CD8-positive, alpha-beta T cell (primary cell): ENCODE measurements at regions of chr2 and their contacts with region 1.

Region 1: GRCh38 chr2:106085181-106085940 is 108.7 kb downstream of the UXS1 start:
- DNase-seq: peak in 7 of 9 experiments; percentile 44 to 81 (median 75)
- ATAC-seq: peak; percentile 94
- H3K4me3 ChIP-seq: peak overlapping the region in 1 of 2 experiments; percentile 5
- H3K4me3 Mint-ChIP-seq: peak overlapping the region; percentile 66
- H3K27ac ChIP-seq: peak overlapping the region; percentile 46 to 59
- H3K27ac Mint-ChIP-seq: peak overlapping the region; percentile 98
- H3K4me1 ChIP-seq: peaks cover 56% of the 10 kb centered on the region
- H3K4me1 Mint-ChIP-seq: peaks cover 72% of the 10 kb centered on the region
- H3K27me3 ChIP-seq: no peaks in the 10 kb centered on the region
- H3K27me3 Mint-ChIP-seq: no peaks in the 10 kb centered on the region
- CTCF ChIP-seq: peak; percentile 57

Region 2: DNA sequence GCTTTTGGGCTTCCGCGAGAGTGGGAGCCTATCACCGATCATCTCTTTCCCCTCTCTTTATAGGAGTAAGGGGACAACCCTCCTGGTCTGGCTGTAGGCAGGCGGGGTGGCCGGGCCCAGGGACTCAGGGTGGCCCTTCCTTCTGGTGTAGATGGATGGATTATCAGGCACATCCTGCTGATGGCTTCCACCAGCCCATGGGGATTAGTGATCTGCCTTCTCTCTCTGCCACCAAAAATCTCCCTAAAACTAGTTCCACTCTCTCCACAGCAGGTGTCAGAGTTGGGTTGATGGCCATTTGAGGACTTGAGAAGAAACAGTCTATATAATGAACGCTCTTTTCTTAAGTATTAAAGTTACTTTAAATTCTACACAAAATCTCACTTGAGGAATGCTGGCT is 303.2 kb before region 1 on chr2:
- CTCF ChIA-PET with region 1: interaction called, 13 read pairs
- POLR2A ChIA-PET with region 1: no interaction called
- intact Hi-C with region 1: no loop called
- DNase-seq: peak in 3 of 9 experiments; percentile 40 to 66 (median 57)
- ATAC-seq: peak; percentile 41
- H3K4me3 ChIP-seq: no peak overlapping the region
- H3K4me3 Mint-ChIP-seq: peak overlapping the region; percentile 81
- H3K27ac ChIP-seq: peak overlapping the region in 1 of 2 experiments; percentile 31
- H3K27ac Mint-ChIP-seq: peak overlapping the region; percentile 98
- H3K4me1 ChIP-seq: peaks cover 99% of the 10 kb centered on the region
- H3K4me1 Mint-ChIP-seq: peaks cover 94% of the 10 kb centered on the region
- H3K27me3 ChIP-seq: no peaks in the 10 kb centered on the region
- H3K27me3 Mint-ChIP-seq: no peaks in the 10 kb centered on the region
- CTCF ChIP-seq: peak; percentile 62

Region 3: DNA sequence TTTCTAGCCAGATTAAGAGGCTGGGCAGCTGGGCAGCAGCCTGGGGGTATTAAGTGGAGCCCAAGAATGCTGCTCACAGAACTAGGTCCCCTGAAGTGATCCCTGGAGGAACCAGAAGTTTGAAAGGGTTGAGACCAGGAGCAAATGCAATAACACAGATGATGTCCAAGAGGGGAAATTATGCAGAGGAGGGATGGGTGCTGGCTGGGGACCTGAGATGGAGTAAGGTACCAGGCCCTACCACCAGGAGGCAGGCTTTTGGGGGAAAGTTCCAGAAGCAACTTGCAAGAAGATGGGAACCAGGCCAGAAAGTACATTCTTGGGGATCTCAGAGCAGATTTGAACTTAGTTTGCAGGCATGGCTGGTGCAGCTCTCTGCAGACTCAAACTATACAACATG is 165.5 kb before region 1 on chr2:
- CTCF ChIA-PET with region 1: interaction called, 5 read pairs
- POLR2A ChIA-PET with region 1: interaction called, 5 read pairs
- intact Hi-C with region 1: loop called in 1 of 2 experiments (anchors 1 kb)
- DNase-seq: peak; percentile 24 to 75 (median 61)
- ATAC-seq: peak; percentile 58
- H3K4me3 ChIP-seq: no peak overlapping the region
- H3K4me3 Mint-ChIP-seq: no peak overlapping the region
- H3K27ac ChIP-seq: no peak overlapping the region
- H3K27ac Mint-ChIP-seq: no peak overlapping the region
- H3K4me1 ChIP-seq: peaks cover 32% of the 10 kb centered on the region
- H3K4me1 Mint-ChIP-seq: peaks cover 41% of the 10 kb centered on the region
- H3K27me3 ChIP-seq: no peaks in the 10 kb centered on the region
- H3K27me3 Mint-ChIP-seq: no peaks in the 10 kb centered on the region
- CTCF ChIP-seq: peak; percentile 59

Region 4: GRCh38 chr2:106205488-106205887 is 120.1 kb after region 1 on chr2:
- CTCF ChIA-PET with region 1: no interaction called
- POLR2A ChIA-PET with region 1: no interaction called
- intact Hi-C with region 1: no loop called
- DNase-seq: no peak
- ATAC-seq: peak; percentile 64
- H3K4me3 ChIP-seq: no peak overlapping the region
- H3K4me3 Mint-ChIP-seq: no peak overlapping the region
- H3K27ac ChIP-seq: no peak overlapping the region
- H3K27ac Mint-ChIP-seq: no peak overlapping the region
- H3K4me1 ChIP-seq: no peaks in the 10 kb centered on the region
- H3K4me1 Mint-ChIP-seq: peaks cover 15% of the 10 kb centered on the region
- H3K27me3 ChIP-seq: no peaks in the 10 kb centered on the region
- H3K27me3 Mint-ChIP-seq: no peaks in the 10 kb centered on the region
- CTCF ChIP-seq: no peak